ENCODE measurements at regions of chr19 and their contacts with region 1.

Region 1: GRCh38 chr19:53982611-53983010 is 8.8 kb upstream of the CACNG6 start:
- DNase-seq: peak; percentile 64 to 79
- ATAC-seq: no peak
- H3K4me3 ChIP-seq: peak overlapping the region; percentile 69
- H3K27ac ChIP-seq: peak overlapping the region; percentile 84 to 97
- H3K4me1 ChIP-seq: peaks cover 22% of the 10 kb centered on the region
- CTCF ChIP-seq: no peak
- EP300 ChIP-seq: no peak
- POLR2A ChIP-seq: no peak
- RAD21 ChIP-seq: no peak

Region 2: GRCh38 chr19:53867225-53868090 is 115.2 kb before region 1 on chr19 and contains the start of gene MYADM:
- CTCF ChIA-PET with region 1: interaction called, 6 read pairs
- POLR2A ChIA-PET with region 1: interaction called, 54 read pairs
- DNase-seq: peak; percentile 99 to 100
- ATAC-seq: peak; percentile 48 to 57
- H3K4me3 ChIP-seq: peak within 1 kb of the TSS; percentile 69
- H3K27ac ChIP-seq: peak within 1 kb of the TSS; percentile 94
- H3K4me1 ChIP-seq: peaks cover 34% of the 10 kb centered on the region
- CTCF ChIP-seq: no peak
- EP300 ChIP-seq: peak in 1 of 2 experiments; percentile 57; a peak in 1 of 5 replicates
- POLR2A ChIP-seq: peak; percentile 66
- RAD21 ChIP-seq: no peak
- polyA plus RNA-seq, gene MYADM: 37.7 and 56.1 TPM in 2 replicates

Region 3: GRCh38 chr19:53947624-53948023 is 35.0 kb before region 1 on chr19:
- CTCF ChIA-PET with region 1: interaction called, 7 read pairs
- POLR2A ChIA-PET with region 1: interaction called, 14 read pairs
- DNase-seq: peak; percentile 67 to 84
- ATAC-seq: peak; percentile 73 to 83; a peak in 4 of 6 replicates
- H3K4me3 ChIP-seq: no peak overlapping the region
- H3K27ac ChIP-seq: no peak overlapping the region
- H3K4me1 ChIP-seq: 0 out of 3 replicates have a peak, but pooled peaks cover 8% of the 10 kb centered on the region
- CTCF ChIP-seq: peak; percentile 40; the same call in 2 of the 3 replicates
- EP300 ChIP-seq: no peak
- POLR2A ChIP-seq: no peak
- RAD21 ChIP-seq: peak; percentile 24 to 63; a peak in 2 of 5 replicates

Region 4: DNA sequence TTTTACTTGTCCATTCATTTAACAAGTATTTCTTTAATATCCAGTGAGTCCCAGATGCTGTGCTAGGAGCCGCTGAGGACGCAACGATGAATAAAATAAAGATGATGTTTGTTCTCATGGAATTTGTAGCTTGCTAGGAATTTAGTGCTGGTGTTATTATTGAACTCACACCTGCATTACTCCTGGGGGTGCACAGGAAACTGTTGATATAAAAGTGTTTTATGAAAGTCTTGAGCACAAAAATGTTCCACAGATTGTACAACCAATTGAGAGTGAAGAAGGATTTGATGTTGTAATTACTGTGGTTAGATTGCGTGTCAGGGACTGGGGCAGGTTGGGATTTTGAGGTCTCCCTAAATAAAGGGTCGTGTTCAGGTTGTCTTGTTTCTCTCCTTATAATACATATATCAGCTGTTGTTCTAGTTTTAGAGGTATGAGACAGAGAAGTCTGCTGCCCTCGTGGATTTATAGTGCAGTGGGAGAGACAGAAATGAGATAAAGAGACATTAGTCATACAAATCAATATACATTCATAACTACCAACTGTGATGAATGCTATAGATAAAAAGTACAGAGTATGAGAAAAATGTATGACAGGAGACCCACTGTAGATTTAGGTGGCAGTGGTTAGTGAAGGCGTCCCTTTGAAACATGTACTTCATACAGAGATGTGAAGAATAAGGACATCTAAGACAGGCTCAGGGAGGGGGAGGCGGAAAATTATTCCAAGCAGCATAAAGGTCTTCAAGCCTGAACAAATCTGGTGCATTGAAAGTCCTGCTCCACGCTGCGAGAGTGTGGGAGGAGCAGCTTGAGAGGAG is 20.1 kb after region 1 on chr19:
- CTCF ChIA-PET with region 1: interaction called, 3 read pairs
- POLR2A ChIA-PET with region 1: interaction called, 12 read pairs
- DNase-seq: no peak
- ATAC-seq: peak in 1 of 2 experiments; percentile 6; a peak in 3 of 6 replicates
- H3K4me3 ChIP-seq: no peak overlapping the region
- H3K27ac ChIP-seq: peak overlapping the region; percentile 33 to 71; a peak in 5 of 6 replicates
- H3K4me1 ChIP-seq: peaks cover 43% of the 10 kb centered on the region
- CTCF ChIP-seq: no peak
- EP300 ChIP-seq: no peak
- POLR2A ChIP-seq: no peak
- RAD21 ChIP-seq: no peak

Region 5: DNA sequence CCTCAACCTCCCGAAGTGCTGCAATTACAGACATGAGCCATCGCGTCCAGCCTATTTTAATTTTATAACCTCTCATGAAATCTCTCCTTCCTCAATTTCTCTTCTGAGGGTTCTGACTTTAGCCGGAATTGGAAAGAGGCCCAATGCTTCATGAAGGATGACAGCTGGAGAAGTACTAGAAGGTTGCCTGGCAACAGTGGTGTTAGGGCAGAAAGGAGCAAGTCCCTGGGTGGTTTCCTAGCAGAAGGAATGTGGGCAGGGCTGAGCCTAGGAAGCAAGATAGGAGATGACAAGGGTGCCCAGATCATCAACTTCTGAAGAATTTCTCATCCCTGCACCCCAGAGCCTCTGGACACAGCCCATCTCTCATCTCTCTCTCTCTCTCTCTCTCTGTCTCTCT is 34.6 kb after region 1 on chr19:
- CTCF ChIA-PET with region 1: interaction called, 59 read pairs
- POLR2A ChIA-PET with region 1: interaction called, 10 read pairs
- DNase-seq: peak; percentile 50 to 88
- ATAC-seq: peak in 1 of 2 experiments; percentile 15; a peak in 3 of 6 replicates
- H3K4me3 ChIP-seq: no peak overlapping the region
- H3K27ac ChIP-seq: peak overlapping the region; percentile 85 to 92; a peak in 4 of 6 replicates
- H3K4me1 ChIP-seq: peaks cover 34% of the 10 kb centered on the region
- CTCF ChIP-seq: no peak
- EP300 ChIP-seq: no peak
- POLR2A ChIP-seq: no peak
- RAD21 ChIP-seq: no peak

Region 6: GRCh38 chr19:54077334-54077733 is 94.7 kb after region 1 on chr19:
- CTCF ChIA-PET with region 1: no interaction called
- POLR2A ChIA-PET with region 1: no interaction called
- DNase-seq: no peak
- ATAC-seq: no peak
- H3K4me3 ChIP-seq: no peak overlapping the region
- H3K27ac ChIP-seq: no peak overlapping the region
- H3K4me1 ChIP-seq: no peaks in the 10 kb centered on the region
- CTCF ChIP-seq: no peak
- EP300 ChIP-seq: no peak
- POLR2A ChIP-seq: no peak
- RAD21 ChIP-seq: no peak

Region 7: DNA sequence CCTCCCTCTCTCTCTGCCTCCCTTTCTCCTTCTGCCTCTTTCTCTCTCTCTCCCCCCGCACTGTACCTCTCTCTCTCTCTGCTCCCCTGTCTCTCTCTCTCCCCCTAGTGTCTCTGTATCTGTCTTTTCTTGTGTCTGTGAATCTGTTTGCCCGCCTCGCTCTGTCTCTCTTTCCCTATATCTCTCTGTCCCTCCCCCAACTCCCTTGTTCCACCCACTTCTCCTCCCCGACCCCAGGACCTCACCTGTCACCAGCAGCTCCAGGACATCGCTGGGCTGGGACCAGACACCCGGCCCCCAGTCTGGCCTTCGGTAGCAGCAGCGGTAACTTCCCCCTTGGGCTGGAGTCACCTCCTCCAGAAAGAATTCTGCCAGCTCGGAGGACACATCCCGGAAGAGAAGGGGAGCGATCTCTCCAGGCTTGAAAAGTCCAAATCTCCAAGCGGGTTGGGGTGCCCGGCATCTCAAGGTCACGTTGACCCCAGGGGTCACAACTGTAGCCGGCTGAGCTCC is 114.1 kb after region 1 on chr19:
- CTCF ChIA-PET with region 1: interaction called, 14 read pairs
- POLR2A ChIA-PET with region 1: no interaction called
- DNase-seq: peak; percentile 68 to 79
- ATAC-seq: peak; percentile 88 to 89
- H3K4me3 ChIP-seq: peak overlapping the region; percentile 33
- H3K27ac ChIP-seq: peak overlapping the region; percentile 40 to 78; a peak in 5 of 6 replicates
- H3K4me1 ChIP-seq: peaks cover 11% of the 10 kb centered on the region; the same call in 1 of the 3 replicates
- CTCF ChIP-seq: no peak; the same call in 2 of the 3 replicates
- EP300 ChIP-seq: no peak
- POLR2A ChIP-seq: peak; percentile 17; the same call in 1 of the 2 replicates
- RAD21 ChIP-seq: peak in 1 of 2 experiments; percentile 65; a peak in 4 of 5 replicates

Region 8: GRCh38 chr19:54207977-54208783 is 225.6 kb after region 1 on chr19:
- CTCF ChIA-PET with region 1: no interaction called
- POLR2A ChIA-PET with region 1: no interaction called
- DNase-seq: peak in 1 of 2 experiments; percentile 59
- ATAC-seq: peak; percentile 2 to 12; a peak in 5 of 6 replicates
- H3K4me3 ChIP-seq: peak overlapping the region; percentile 7; the same call in 1 of the 3 replicates
- H3K27ac ChIP-seq: peak overlapping the region; percentile 14 to 68; a peak in 3 of 6 replicates
- H3K4me1 ChIP-seq: peaks cover 82% of the 10 kb centered on the region
- CTCF ChIP-seq: no peak
- EP300 ChIP-seq: no peak
- POLR2A ChIP-seq: no peak
- RAD21 ChIP-seq: no peak